ENCODE measurements at regions of chr7 and their contacts with region 1.

Region 1: GRCh38 chr7:27196287-27196767 is 3.6 kb downstream of the HOXA13 start:
- DNase-seq: peak in 1 of 2 donors; percentile 78
- ATAC-seq: no peak
- H3K4me3 ChIP-seq: peak overlapping the region in 3 of 4 donors; percentile 1 to 67 (median 28)
- H3K27ac ChIP-seq: peak overlapping the region in 3 of 4 donors; percentile 21 to 90 (median 44)
- H3K4me1 ChIP-seq: peaks cover 9 to 37% of the 10 kb centered on the region in 2 donors
- H3K27me3 ChIP-seq: peaks cover 11 to 41% (median 20%) of the 10 kb centered on the region in 3 donors
- CTCF ChIP-seq: peak; percentile 72 to 77 (median 75)
- POLR2A ChIP-seq: no peak

Region 2: DNA sequence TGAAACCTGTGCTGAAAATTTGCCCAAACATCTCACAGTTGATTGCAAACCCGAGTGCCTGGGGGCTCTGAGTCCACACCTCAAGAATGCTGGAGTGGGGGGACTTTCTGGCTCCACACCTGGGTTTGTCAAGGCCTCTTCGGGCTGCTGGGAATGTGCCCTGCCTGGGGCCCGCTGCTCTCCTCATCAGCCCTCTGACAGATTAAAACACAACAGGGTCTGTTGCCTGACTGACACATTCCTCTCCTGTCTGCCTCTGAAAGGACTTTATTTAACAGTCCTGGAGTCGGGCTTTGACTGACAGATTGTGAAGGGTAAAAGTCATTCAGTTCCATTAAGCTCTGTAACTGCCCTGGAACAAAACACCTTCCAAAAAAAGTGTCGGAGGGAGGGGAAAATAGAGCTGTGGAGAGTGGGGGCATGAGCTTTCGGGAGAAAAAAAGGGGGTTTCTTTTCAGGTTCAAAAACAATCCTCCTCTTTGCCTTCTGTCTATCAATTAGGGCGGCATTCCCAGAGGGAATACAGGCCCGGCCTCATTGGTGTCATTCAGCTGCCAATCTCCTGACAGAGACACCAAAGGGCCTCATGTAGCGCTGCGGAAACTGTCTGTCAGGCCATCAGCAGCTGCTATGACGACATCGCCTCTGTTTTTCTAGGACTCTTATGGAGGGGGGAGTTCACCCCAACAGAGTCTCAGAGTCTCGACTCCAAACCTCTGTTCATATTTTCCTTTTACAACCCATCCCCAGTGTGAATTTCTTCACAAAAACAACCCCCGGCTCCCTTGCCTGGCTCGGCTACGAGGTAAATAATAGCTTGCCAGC is 1443.1 kb before region 1 on chr7:
- in situ Hi-C with region 1: loop called in 1 of 4 experiments (anchors 25 kb)
- intact Hi-C with region 1: no loop called
- DNase-seq: peak; percentile 59 to 60
- ATAC-seq: peak; percentile 51 to 68
- H3K4me3 ChIP-seq: no peak overlapping the region
- H3K27ac ChIP-seq: peak overlapping the region; percentile 86 to 94 (median 90)
- H3K4me1 ChIP-seq: peaks cover 38 to 61% of the 10 kb centered on the region in 2 donors
- H3K27me3 ChIP-seq: no peaks in the 10 kb centered on the region
- CTCF ChIP-seq: no peak
- POLR2A ChIP-seq: no peak

Region 3: DNA sequence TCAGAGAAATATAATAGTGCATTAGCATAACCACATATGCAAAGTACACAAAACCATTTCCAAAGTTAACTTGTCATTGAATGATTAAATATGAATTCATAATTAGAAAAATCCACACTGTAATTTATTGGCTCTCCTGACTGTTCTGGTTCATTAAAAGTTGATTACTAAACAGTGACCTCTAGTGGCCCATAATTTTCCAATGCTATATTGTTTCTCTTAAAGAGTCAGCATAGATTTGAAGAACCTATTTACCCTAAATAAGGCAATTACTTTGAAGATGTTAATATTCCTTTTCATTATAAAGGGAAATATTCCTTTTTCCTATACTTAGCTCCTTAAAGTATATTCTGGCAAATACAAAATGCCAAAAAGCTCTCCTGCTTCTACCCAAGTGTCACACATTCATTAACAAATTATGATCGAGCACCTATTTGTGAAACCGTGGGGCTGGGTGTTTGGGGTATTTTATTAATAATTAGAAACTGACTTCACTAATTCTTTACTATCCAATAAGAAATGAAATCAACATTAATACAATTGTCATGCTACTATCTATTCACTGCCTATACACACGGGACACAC is 380.1 kb after region 1 on chr7:
- in situ Hi-C with region 1: loop called (anchors 10 to 25 kb)
- intact Hi-C with region 1: loop called (anchors 1 kb)
- DNase-seq: no peak
- ATAC-seq: peak in 1 of 2 donors; percentile 62
- H3K4me3 ChIP-seq: no peak overlapping the region
- H3K27ac ChIP-seq: no peak overlapping the region
- H3K4me1 ChIP-seq: no peaks in the 10 kb centered on the region
- H3K27me3 ChIP-seq: no peaks in the 10 kb centered on the region
- CTCF ChIP-seq: peak; percentile 37 to 64 (median 57)
- POLR2A ChIP-seq: no peak

Region 4: GRCh38 chr7:27739909-27740448 is 543.7 kb after region 1 on chr7 and contains the start of gene TAX1BP1:
- in situ Hi-C with region 1: no loop called
- intact Hi-C with region 1: loop called (anchors 5 kb)
- DNase-seq: peak; percentile 93 to 94
- ATAC-seq: peak; percentile 95 to 97
- H3K4me3 ChIP-seq: peak within 1 kb of the TSS; percentile 86 to 98 (median 96)
- H3K27ac ChIP-seq: peak within 1 kb of the TSS; percentile 94 to 99 (median 98)
- H3K4me1 ChIP-seq: peaks cover 24 to 30% of the 10 kb centered on the region in 2 donors
- H3K27me3 ChIP-seq: no peaks in the 10 kb centered on the region
- CTCF ChIP-seq: no peak
- POLR2A ChIP-seq: peak; percentile 96 to 97
- total RNA-seq, gene TAX1BP1: 110 to 136 (median 113) TPM

Region 5: DNA sequence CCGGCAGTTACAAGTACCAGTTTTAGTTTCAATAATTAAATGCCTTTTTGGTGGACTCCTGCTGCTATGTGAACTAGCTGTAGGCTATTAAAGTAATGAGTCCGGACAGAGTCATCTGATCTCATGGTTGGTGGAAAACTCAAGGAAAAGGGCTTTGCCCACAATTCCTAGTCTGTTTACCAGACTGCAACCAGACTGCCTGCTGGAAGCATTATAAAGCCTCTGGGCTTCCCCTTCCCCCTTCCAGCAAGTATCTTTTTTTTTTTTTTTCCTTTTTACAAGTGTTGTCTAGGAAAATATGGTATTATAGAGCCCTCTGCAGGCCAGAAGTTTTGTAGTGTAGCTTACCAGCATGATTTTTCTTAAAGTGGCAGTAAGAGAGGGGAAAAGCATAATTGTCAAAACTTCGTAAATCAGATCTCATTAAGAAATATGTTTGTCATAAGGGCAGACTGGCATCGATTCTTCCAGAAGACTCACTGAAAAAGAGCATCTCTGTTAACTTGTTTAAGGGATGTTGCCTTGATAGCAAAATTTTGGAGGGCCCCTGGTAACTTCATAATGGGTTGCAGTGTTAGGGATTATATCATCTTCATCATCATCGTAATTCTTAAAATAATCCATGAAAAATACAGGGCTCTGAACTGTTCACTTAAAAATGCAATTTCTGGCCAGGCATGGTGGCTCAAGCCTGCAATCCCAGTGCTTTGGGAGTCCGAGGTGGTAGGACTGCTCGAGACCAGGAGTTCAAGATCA is 724.9 kb after region 1 on chr7:
- in situ Hi-C with region 1: loop called (anchors 10 to 25 kb)
- intact Hi-C with region 1: loop called (anchors 2 kb)
- DNase-seq: no peak
- ATAC-seq: peak; percentile 65 to 83
- H3K4me3 ChIP-seq: peak overlapping the region in 1 of 4 donors; percentile 31
- H3K27ac ChIP-seq: no peak overlapping the region
- H3K4me1 ChIP-seq: peaks cover 4 to 10% of the 10 kb centered on the region in 2 donors
- H3K27me3 ChIP-seq: no peaks in the 10 kb centered on the region
- CTCF ChIP-seq: peak in 4 of 5 experiments; percentile 16 to 48 (median 36)
- POLR2A ChIP-seq: no peak

Region 6: DNA sequence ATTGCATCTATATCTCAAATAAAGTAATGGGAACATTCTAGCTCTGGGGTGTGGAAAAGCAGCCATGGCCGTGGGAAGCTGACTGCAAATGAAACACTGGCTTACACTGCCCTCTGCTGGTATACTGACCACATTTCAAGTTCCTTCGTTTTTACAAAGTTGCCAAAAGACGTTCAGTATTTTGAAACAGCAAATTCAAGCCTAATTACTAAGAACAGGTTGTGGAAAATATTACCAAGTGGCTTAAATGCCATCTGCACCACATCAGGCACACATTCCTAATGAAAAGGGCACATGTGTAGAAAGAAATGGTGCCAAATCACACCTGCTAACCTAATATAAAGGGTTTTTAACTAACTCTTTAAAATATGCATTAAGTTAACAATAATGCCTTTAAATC is 900.4 kb after region 1 on chr7:
- in situ Hi-C with region 1: loop called in 1 of 4 experiments (anchors 25 kb)
- intact Hi-C with region 1: loop called (anchors 5 kb)
- DNase-seq: peak; percentile 38 to 46
- ATAC-seq: peak; percentile 30 to 82
- H3K4me3 ChIP-seq: no peak overlapping the region
- H3K27ac ChIP-seq: peak overlapping the region in 1 of 4 donors; percentile 22
- H3K4me1 ChIP-seq: peaks cover 0 to 8% of the 10 kb centered on the region in 2 donors
- H3K27me3 ChIP-seq: no peaks in the 10 kb centered on the region
- CTCF ChIP-seq: peak; percentile 77 to 86 (median 85)
- POLR2A ChIP-seq: no peak

Region 7: DNA sequence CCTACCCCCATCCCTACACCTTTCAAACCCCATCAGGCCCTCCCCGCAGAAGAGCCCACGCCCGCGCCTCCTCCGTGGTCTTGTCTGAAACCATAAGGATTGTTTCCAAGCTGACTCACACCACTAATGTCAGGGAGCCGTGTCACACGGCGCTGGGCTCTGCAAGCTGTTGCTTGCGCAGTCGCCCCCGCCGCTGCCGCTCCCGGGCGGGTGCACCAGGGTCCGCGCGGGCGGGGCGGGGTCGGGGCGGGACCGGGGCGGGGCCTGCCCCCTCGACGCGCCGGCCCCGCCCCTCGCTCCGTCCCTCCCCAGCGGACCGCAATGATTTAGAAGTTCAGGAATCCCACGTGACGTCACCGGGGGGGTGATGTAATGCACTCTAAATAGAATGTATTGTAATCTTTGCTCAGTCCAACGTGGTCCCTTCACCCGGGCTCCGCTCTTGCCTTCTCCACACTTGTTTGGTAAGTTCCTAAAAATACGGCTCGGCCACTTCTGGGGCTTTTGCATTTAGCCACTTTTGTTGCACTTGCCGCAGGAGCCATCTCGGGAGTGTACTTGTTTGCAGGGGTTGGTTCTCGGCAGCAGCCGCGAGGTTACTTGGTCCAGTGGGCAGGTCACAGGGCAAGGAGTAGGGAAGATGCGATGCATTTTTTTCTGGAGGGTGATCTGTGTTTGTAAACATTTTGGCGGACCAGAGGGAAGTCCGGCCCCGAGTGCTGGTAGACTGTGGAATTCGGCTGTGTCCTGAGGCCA is 1212.8 kb after region 1 on chr7:
- in situ Hi-C with region 1: loop called in 1 of 4 experiments (anchors 25 kb)
- intact Hi-C with region 1: no loop called
- DNase-seq: peak; percentile 94 to 98
- ATAC-seq: peak; percentile 72 to 80
- H3K4me3 ChIP-seq: peak overlapping the region; percentile 61 to 92 (median 72)
- H3K27ac ChIP-seq: peak overlapping the region; percentile 91 to 98 (median 94)
- H3K4me1 ChIP-seq: peaks cover 9 to 21% of the 10 kb centered on the region in 2 donors
- H3K27me3 ChIP-seq: no peaks in the 10 kb centered on the region
- CTCF ChIP-seq: no peak
- POLR2A ChIP-seq: peak; percentile 90 to 91

Measured in gastrocnemius medialis (tissue), 4 donors.